Endothelial cell of umbilical vein (primary cell): ENCODE measurements at regions of chr12 and their contacts with region 1.

Region 1: GRCh38 chr12:16385782-16386646 is 38.6 kb downstream of the MGST1 start:
- DNase-seq: peak; percentile 50
- H3K4me3 ChIP-seq: no peak overlapping the region
- H3K27ac ChIP-seq: no peak overlapping the region
- H3K4me1 ChIP-seq: no peaks in the 10 kb centered on the region
- H3K27me3 ChIP-seq: no peaks in the 10 kb centered on the region
- CTCF ChIP-seq: peak; percentile 28 to 44
- POLR2A ChIP-seq: no peak

Region 2: DNA sequence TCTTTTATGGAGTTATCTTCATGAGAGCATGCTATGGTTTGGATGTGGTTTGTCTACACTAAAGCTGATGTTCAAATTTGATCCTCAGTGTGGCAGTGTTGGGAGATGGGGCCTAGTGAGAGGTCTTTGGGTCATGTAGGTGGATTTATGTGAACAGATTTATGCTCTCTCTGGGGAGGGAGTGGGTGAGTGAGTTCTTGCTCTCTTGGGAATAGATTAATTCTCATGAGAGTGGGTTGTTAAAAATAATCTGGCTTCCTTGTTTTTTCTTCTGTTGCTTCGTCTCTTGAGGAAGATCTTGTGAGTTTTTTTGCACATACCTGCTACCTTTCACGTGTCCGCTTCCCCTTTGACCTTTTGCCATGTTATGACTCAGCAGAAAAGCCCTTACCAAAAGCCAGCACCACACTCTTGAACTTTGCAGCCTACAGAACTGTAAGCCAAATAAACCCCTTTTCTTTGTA is 454.4 kb before region 1 on chr12:
- CTCF ChIA-PET with region 1: no interaction called
- POLR2A ChIA-PET with region 1: no interaction called
- dilution Hi-C with region 1: no loop called
- intact Hi-C with region 1: no loop called
- DNase-seq: no peak
- H3K4me3 ChIP-seq: no peak overlapping the region
- H3K27ac ChIP-seq: no peak overlapping the region
- H3K4me1 ChIP-seq: peaks cover 15% of the 10 kb centered on the region
- H3K27me3 ChIP-seq: no peaks in the 10 kb centered on the region
- CTCF ChIP-seq: no peak
- POLR2A ChIP-seq: no peak

Region 3: GRCh38 chr12:17928708-17929366 is 1542.8 kb after region 1 on chr12:
- CTCF ChIA-PET with region 1: interaction called, 4 read pairs
- POLR2A ChIA-PET with region 1: no interaction called
- dilution Hi-C with region 1: no loop called
- intact Hi-C with region 1: loop called (anchors 2 kb)
- DNase-seq: peak; percentile 90
- H3K4me3 ChIP-seq: peak overlapping the region in 1 of 3 experiments; percentile 48
- H3K27ac ChIP-seq: peak overlapping the region; percentile 90
- H3K4me1 ChIP-seq: peaks cover 23% of the 10 kb centered on the region
- H3K27me3 ChIP-seq: no peaks in the 10 kb centered on the region
- CTCF ChIP-seq: peak in 1 of 2 donors; percentile 19
- POLR2A ChIP-seq: no peak